ENCODE measurements at regions of chr5 and their contacts with region 1.

Region 1: GRCh38 chr5:38441453-38442246 is 114.8 kb downstream of the LIFR start:
- DNase-seq: no peak
- H3K4me3 ChIP-seq: no peak overlapping the region
- CTCF ChIP-seq: peak; percentile 91

Region 2: DNA sequence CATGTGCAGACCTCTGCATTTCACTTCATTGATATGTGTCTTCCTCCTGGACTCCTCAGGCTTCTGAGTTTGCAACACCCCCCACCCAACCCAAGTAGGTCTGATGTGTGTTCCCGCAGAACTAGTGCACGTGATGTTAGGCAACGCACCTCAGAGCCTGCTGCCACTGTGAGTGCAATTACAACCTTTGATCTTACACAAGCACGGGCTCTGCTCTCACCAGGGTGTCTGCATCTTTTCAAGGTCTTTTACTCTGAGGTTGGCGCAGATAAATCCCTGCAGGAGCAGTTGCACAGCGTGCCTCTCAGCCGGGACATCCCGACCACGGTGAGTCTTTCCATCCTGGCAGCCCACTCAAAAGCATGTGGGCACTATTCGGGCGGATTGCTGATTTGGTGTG is 103.2 kb before region 1 on chr5:
- CTCF ChIA-PET with region 1: no interaction called
- POLR2A ChIA-PET with region 1: no interaction called
- DNase-seq: no peak
- H3K4me3 ChIP-seq: no peak overlapping the region
- CTCF ChIP-seq: no peak

Region 3: DNA sequence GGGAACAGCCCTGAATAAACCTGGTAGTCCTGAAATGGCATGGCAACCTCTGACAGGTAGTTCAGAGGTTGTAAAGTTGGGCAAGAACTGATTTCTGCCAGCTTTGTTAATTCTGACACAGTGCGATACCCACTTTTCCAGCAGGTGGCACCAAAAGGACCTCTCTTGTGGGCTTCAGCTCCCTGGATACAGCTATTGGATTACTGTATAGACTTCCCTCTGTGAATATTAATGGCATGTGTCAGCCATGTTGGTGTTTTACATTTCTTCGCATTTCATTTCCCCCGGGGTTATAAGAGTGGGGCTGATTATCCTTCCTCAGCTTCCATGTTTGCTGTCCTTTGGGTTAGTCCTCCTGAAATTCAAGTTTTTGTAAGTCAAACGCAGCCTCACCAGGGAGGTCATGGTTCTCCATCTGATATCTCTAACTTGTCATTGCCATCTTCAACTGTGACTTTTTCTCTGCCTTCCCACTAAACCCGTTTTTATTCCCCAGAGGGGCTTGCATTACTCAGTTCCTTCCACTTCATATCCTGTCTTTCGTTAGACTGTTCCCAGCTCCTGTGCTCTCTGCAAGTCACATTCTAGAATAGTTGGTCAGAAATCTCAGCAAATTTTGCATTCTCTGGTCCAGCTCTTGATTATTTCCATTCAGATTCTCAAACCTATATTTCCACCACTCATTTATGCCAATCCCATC is 20.8 kb before region 1 on chr5:
- CTCF ChIA-PET with region 1: interaction called, 81 read pairs
- POLR2A ChIA-PET with region 1: no interaction called
- DNase-seq: no peak
- H3K4me3 ChIP-seq: no peak overlapping the region
- CTCF ChIP-seq: peak; percentile 78

Region 4: GRCh38 chr5:38509185-38509584 is 67.5 kb after region 1 on chr5:
- CTCF ChIA-PET with region 1: interaction called, 31 read pairs
- POLR2A ChIA-PET with region 1: no interaction called
- DNase-seq: peak; percentile 79
- H3K4me3 ChIP-seq: no peak overlapping the region
- CTCF ChIP-seq: no peak

Region 5: GRCh38 chr5:38556599-38557305 is 115.1 kb after region 1 on chr5 and contains the start of gene LIFR:
- CTCF ChIA-PET with region 1: interaction called, 102 read pairs
- POLR2A ChIA-PET with region 1: no interaction called
- DNase-seq: no peak
- H3K4me3 ChIP-seq: peak within 1 kb of the TSS; percentile 76
- CTCF ChIP-seq: no peak

Region 6: GRCh38 chr5:38780950-38781349 is 339.3 kb after region 1 on chr5:
- CTCF ChIA-PET with region 1: interaction called, 34 read pairs
- POLR2A ChIA-PET with region 1: interaction called, 3 read pairs
- DNase-seq: no peak
- H3K4me3 ChIP-seq: no peak overlapping the region
- CTCF ChIP-seq: peak; percentile 33

Region 7: DNA sequence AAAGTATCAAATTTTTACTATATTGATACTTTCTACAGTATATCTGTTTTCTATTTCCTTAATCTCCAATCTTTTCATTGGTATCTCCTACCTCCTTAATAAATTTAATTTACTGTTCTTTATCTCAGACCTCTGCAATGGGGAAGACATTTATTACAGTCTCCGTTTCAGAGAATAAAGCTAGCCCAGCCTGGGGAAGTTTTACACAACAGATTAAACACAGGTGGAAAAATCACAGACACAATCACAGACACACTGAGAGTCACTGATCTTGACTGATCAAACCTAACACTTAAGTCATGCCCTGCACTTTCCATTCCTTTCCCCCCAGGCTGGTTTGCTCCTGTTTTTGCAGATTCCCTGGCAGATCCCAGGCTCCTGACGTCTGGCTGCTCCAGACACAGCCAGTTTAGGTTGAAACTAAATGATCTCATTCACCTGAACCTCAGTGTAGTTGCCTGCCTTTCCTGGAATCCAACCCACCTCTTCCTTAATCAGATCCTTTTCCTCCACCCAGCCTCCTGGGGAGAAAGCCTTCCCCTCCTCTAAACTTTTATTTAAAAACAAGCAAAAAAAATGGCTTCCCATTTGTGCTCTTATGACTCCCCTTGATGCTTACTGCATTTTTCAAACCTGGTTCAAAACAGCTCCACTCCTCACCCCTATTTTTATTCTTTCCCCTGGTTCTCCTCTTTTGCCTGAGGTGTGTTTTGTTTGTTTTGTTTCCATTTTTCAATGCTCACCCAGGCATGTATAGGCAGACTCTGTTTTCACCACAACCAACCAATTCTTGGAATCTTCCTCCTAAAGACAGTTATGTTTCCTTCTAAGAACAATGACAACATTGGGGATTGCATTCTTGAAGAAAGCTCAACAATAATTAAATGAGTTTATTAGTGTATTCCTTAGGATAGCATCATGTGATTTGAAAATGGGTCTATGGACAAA is 374.7 kb after region 1 on chr5:
- CTCF ChIA-PET with region 1: interaction called, 304 read pairs
- POLR2A ChIA-PET with region 1: no interaction called
- DNase-seq: no peak
- H3K4me3 ChIP-seq: no peak overlapping the region
- CTCF ChIP-seq: no peak

Measured in AG04449 (cell line).